ENCODE measurements at regions of chr13 and their contacts with region 1.

Region 1: DNA sequence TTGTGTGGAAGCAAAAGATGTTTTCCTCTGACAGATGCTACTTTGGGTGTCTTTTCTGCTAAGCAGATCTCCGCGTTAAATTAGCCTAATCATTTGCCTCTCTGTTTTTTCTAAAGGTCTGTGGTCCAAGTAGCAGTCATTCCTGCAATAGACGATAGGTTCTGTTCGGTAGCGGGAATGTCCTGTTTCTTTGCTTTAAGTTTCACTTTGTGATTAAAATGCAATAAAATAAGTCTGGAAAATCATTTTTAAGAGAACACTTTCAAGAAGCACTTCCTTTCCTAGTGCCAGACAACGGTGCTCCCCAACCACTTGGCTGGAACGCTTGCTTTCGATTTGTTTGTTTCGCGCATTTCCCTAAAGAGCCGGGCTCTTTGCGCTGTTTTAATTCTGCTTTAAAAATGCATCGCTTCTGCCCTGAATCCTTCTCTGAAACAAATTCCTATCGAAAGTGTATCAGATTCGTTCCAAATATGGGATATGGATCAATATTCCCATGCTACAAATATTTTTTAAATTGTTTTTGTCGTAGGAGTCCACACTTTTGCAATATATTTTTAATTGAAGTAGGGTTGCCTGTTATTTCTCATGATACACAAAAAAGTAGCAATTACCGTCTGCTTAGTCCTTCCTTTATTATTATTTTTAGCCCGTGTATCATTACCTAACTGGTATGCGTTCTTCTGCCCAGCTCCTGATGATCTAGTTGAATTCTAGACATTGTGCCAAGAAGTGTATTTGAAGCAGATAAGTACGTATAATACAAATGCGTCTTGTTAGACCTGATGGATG is 14.2 kb downstream of the ZIC2 start:
- DNase-seq: no peak
- H3K4me3 Mint-ChIP-seq: no peak overlapping the region
- H3K27ac Mint-ChIP-seq: no peak overlapping the region
- H3K4me1 Mint-ChIP-seq: peaks cover 10% of the 10 kb centered on the region
- H3K27me3 Mint-ChIP-seq: peaks cover 77% of the 10 kb centered on the region

Region 2: GRCh38 chr13:99955747-99956472 is 39.9 kb before region 1 on chr13:
- CTCF ChIA-PET with region 1: no interaction called
- intact Hi-C with region 1: loop called (anchors 1 kb)
- DNase-seq: no peak
- H3K4me3 Mint-ChIP-seq: peak overlapping the region; percentile 26
- H3K27ac Mint-ChIP-seq: no peak overlapping the region
- H3K4me1 Mint-ChIP-seq: peaks cover 23% of the 10 kb centered on the region
- H3K27me3 Mint-ChIP-seq: peaks cover 70% of the 10 kb centered on the region

Region 3: GRCh38 chr13:99969919-99970621 is 25.7 kb before region 1 on chr13:
- CTCF ChIA-PET with region 1: no interaction called
- intact Hi-C with region 1: loop called (anchors 1 kb)
- DNase-seq: peak; percentile 53
- H3K4me3 Mint-ChIP-seq: peak overlapping the region; percentile 71
- H3K27ac Mint-ChIP-seq: peak overlapping the region; percentile 30
- H3K4me1 Mint-ChIP-seq: peaks cover 23% of the 10 kb centered on the region
- H3K27me3 Mint-ChIP-seq: peaks cover 75% of the 10 kb centered on the region

Region 4: DNA sequence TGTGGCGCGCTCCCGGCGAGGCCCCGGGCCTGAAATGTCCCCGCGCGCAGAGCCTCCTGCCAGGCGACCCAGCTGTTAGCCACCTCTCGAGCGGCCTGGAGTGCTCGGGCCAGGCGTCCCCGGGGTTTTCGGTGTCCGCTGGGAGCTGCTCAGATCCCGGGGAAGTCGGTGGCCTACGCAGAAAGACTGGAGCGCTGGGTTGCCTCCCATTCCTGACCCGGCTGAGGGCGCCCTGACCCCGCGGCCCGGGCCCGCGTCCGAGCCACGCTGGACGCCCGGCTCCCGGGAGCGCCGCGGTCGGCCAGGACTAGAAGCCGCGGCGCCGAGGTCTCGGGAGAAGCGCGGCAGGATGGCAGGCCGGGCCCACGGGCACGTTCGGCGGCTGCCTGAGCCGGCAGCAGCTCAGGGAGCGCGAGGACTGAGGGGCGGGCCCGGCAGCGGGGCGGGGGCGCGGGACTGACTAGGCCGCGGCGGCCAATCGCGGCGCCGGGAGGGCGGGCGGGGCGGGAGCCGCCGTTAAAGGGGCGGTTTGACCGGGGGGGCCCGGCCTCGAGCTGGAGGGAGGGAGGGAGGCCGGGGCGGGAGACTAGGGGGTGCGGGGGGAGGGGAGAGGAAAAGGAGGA is 15.5 kb before region 1 on chr13:
- CTCF ChIA-PET with region 1: no interaction called
- intact Hi-C with region 1: loop called (anchors 1 kb)
- DNase-seq: peak; percentile 62
- H3K4me3 Mint-ChIP-seq: peak overlapping the region; percentile 15
- H3K27ac Mint-ChIP-seq: no peak overlapping the region
- H3K4me1 Mint-ChIP-seq: peaks cover 23% of the 10 kb centered on the region
- H3K27me3 Mint-ChIP-seq: peaks cover 69% of the 10 kb centered on the region